HEK293 (cell line): ENCODE measurements at regions of chr11 and their contacts with region 1.

Region 1: GRCh38 chr11:61254403-61255025 is 13.5 kb downstream of the PGA5 start:
- H3K4me3 ChIP-seq: no peak overlapping the region
- H3K27ac ChIP-seq: no peak overlapping the region
- H3K4me1 ChIP-seq: no peaks in the 10 kb centered on the region
- CTCF ChIP-seq: peak; percentile 59

Region 2: DNA sequence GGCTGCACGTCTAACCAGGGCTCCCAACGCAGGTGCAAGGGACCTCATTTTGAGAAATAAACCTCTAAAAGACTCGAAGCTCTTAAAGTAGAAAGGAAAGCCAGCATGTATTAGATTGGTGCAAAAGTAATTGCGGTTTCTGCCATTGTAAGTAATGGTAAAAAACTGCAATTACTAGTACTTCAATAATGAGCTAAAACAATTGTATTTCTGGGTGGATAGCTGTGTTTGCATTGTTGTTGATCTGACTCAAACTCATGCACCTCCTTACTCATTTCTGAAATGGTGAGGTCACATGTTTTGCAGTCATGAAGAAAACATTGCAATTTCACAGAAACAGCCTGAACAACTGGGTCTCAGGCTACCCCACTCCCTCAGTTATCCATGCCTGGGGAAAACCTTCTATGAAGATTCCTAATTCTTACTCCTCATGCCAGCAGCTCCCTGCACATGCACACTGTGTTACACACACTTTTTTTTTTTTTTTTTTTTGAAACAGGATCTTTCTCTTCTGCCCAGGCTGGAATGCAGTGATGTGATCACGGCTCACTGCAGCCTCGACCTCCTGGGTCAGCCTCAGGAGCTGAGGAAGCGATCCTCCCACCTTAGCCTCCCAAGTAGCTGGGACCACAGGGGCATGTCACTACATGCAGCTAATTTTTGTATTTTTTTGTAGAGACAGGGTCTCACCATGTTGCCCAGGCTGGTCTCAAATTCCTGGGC is 16.0 kb after region 1 on chr11:
- CTCF ChIA-PET with region 1: interaction called, 13 read pairs
- POLR2A ChIA-PET with region 1: no interaction called
- H3K4me3 ChIP-seq: no peak overlapping the region
- H3K27ac ChIP-seq: no peak overlapping the region
- H3K4me1 ChIP-seq: no peaks in the 10 kb centered on the region
- CTCF ChIP-seq: no peak

Region 3: DNA sequence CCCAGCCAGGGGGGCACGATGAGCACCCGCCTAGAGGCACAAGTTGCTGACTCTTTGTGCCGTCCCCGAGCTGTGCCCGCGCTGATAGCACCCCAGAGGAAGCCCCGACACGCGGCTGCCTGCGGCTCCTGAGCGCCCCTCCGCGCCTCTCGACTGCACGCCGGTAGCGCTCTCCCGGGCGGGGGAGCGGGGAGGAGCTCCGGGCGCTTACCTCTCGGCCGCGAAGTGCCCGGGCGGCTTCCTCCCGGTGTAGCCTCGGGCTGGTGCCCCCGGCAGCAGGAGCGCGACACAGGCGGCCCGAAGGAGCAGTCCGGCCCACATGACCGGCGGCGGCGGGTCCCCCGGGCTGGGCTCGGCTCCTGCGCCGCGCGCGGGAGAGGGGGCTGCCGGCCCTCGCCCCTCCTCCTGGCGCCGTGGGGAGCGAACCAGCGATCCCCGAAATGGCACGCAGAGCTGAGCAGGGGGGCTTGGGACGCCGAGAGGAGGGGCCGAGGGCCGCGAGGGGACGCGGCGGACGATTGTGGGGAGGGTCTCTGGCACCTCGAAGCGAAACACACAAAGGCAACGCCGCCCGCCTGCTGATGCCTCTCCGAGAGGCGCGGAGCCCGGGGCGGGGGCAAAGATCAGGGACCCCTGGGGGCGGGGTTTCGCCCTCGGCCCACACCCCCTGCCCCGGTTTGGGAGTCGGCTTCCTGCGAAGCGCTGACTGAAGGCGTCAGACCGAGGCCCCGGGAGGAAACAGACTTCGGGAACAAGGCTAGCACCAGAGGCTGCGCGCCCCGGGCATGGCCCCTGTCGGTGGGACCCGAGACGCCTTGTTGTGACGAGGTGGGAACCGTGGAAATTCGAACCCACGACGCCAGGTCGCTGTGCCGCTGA is 40.4 kb after region 1 on chr11 and contains the start of gene VWCE:
- CTCF ChIA-PET with region 1: interaction called, 10 read pairs
- POLR2A ChIA-PET with region 1: no interaction called
- H3K4me3 ChIP-seq: peak within 1 kb of the TSS; percentile 36
- H3K27ac ChIP-seq: peak within 1 kb of the TSS; percentile 57; the same call in 1 of the 2 replicates
- H3K4me1 ChIP-seq: no peaks in the 10 kb centered on the region; the same call in 1 of the 2 replicates
- CTCF ChIP-seq: peak; percentile 48

Region 4: GRCh38 chr11:61439615-61440014 is 185.1 kb after region 1 on chr11:
- CTCF ChIA-PET with region 1: no interaction called
- POLR2A ChIA-PET with region 1: no interaction called
- H3K4me3 ChIP-seq: no peak overlapping the region
- H3K27ac ChIP-seq: no peak overlapping the region
- H3K4me1 ChIP-seq: no peaks in the 10 kb centered on the region
- CTCF ChIP-seq: no peak